HCT116 (cell line): ENCODE measurements at regions of chr10 and their contacts with region 1.

Region 1: GRCh38 chr10:98028168-98028770 is 2.2 kb downstream of the CRTAC1 start:
- DNase-seq: peak; percentile 37
- ATAC-seq: peak; percentile 95
- H3K4me3 ChIP-seq: no peak overlapping the region
- H3K27ac ChIP-seq: no peak overlapping the region
- H3K4me1 ChIP-seq: no peaks in the 10 kb centered on the region
- H3K27me3 ChIP-seq: peaks cover 33% of the 10 kb centered on the region
- CTCF ChIP-seq: peak; percentile 78 to 98 (median 96)
- POLR2A ChIP-seq: no peak
- RAD21 ChIP-seq: peak; percentile 73

Region 2: DNA sequence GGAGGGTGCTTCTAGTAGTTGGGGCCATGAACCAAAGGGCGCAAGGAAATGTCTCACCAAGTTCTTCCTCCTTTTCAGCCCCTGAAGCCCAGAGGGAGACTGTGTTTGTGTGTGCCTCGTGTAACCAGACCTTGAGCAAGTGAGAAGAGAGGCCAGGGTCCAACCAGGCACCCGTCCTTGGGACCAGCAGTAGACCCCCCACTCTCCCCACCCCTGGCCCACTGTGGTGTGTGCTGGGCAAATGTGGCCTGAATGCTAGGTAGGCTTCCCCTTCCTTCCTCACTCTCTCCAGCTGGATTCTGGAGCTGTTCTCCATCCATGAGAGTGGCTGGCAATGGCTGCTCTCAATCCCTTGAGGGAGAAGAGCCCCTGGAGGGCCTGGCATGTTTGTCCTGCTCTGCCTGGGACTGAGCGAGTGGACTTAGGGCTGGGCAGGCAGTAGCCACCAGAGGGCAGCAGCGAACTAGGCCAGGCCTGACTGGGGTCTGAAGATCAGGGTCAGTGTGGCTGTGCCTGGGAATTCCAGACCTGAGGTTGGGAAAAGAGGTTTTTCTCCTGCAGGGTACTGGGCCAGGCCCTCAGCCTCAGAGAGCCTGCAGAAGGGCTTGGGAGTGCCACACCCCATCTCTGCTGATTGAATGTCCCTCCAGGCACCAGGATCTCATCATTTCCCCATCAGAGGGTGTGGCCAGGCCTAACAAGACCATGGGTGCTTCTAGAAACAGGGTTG is 268.9 kb before region 1 on chr10:
- CTCF ChIA-PET with region 1: no interaction called
- POLR2A ChIA-PET with region 1: no interaction called
- RAD21 ChIA-PET with region 1: no interaction called
- intact Hi-C with region 1: loop called (anchors 5 kb)
- DNase-seq: peak; percentile 48
- ATAC-seq: peak; percentile 94
- H3K4me3 ChIP-seq: no peak overlapping the region
- H3K27ac ChIP-seq: no peak overlapping the region
- H3K4me1 ChIP-seq: peaks cover 2% of the 10 kb centered on the region in 2 experiments; a peak in 3 of 4 replicates
- H3K27me3 ChIP-seq: no peaks in the 10 kb centered on the region
- CTCF ChIP-seq: peak; percentile 79 to 98 (median 94)
- POLR2A ChIP-seq: no peak
- RAD21 ChIP-seq: peak; percentile 86

Region 3: GRCh38 chr10:97792141-97792721 is 236.0 kb before region 1 on chr10:
- CTCF ChIA-PET with region 1: no interaction called
- POLR2A ChIA-PET with region 1: no interaction called
- RAD21 ChIA-PET with region 1: no interaction called
- intact Hi-C with region 1: loop called (anchors 2 kb)
- DNase-seq: peak; percentile 38
- ATAC-seq: no peak; the same call in 1 of the 2 replicates
- H3K4me3 ChIP-seq: no peak overlapping the region
- H3K27ac ChIP-seq: no peak overlapping the region
- H3K4me1 ChIP-seq: no peaks in the 10 kb centered on the region
- H3K27me3 ChIP-seq: no peaks in the 10 kb centered on the region
- CTCF ChIP-seq: peak; percentile 94 to 96 (median 94)
- POLR2A ChIP-seq: no peak
- RAD21 ChIP-seq: peak; percentile 98

Region 4: DNA sequence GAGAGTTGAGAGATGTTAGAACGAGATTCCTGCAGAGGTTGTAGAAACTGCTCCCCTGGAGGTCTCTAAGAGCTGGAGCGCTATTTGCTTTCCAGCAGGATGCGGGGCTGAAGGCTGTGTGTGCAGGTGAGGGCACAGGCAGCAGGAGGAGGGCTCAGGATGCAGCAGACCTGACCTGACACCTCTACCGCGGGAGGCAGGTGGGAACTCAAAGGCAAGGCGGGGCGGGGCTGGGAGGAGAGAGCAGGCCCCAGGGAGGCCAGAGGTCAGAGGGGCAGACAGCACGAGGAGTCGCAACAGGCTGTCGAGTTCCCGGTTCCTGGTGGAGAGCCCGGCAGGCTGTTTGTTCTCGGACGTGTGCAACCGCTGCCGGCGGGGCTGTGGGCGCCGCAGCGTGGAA is 10.0 kb after region 1 on chr10:
- CTCF ChIA-PET with region 1: interaction called, 34 read pairs
- POLR2A ChIA-PET with region 1: no interaction called
- RAD21 ChIA-PET with region 1: interaction called in 1 of 2 experiments, 5 read pairs
- intact Hi-C with region 1: no loop called
- DNase-seq: no peak
- ATAC-seq: no peak
- H3K4me3 ChIP-seq: no peak overlapping the region
- H3K27ac ChIP-seq: no peak overlapping the region
- H3K4me1 ChIP-seq: peaks cover 0 to 7% of the 10 kb centered on the region in 2 experiments; a peak in 1 of 4 replicates
- H3K27me3 ChIP-seq: peaks cover 51% of the 10 kb centered on the region
- CTCF ChIP-seq: no peak
- POLR2A ChIP-seq: no peak
- RAD21 ChIP-seq: no peak